CD4-positive, alpha-beta T cell (primary cell): ENCODE measurements at regions of chr14 and their contacts with region 1.

Region 1: GRCh38 chr14:94363151-94363624 is 25.2 kb downstream of the SERPINA1 start:
- DNase-seq: no peak
- ATAC-seq: no peak
- H3K4me3 ChIP-seq: no peak overlapping the region
- H3K4me3 Mint-ChIP-seq: no peak overlapping the region
- H3K27ac ChIP-seq: no peak overlapping the region
- H3K27ac Mint-ChIP-seq: no peak overlapping the region
- H3K4me1 ChIP-seq: no peaks in the 10 kb centered on the region
- H3K4me1 Mint-ChIP-seq: no peaks in the 10 kb centered on the region
- H3K27me3 ChIP-seq: peaks cover 0 to 4% of the 10 kb centered on the region in 2 experiments
- H3K27me3 Mint-ChIP-seq: peaks cover 10% of the 10 kb centered on the region
- CTCF ChIP-seq: no peak

Region 2: DNA sequence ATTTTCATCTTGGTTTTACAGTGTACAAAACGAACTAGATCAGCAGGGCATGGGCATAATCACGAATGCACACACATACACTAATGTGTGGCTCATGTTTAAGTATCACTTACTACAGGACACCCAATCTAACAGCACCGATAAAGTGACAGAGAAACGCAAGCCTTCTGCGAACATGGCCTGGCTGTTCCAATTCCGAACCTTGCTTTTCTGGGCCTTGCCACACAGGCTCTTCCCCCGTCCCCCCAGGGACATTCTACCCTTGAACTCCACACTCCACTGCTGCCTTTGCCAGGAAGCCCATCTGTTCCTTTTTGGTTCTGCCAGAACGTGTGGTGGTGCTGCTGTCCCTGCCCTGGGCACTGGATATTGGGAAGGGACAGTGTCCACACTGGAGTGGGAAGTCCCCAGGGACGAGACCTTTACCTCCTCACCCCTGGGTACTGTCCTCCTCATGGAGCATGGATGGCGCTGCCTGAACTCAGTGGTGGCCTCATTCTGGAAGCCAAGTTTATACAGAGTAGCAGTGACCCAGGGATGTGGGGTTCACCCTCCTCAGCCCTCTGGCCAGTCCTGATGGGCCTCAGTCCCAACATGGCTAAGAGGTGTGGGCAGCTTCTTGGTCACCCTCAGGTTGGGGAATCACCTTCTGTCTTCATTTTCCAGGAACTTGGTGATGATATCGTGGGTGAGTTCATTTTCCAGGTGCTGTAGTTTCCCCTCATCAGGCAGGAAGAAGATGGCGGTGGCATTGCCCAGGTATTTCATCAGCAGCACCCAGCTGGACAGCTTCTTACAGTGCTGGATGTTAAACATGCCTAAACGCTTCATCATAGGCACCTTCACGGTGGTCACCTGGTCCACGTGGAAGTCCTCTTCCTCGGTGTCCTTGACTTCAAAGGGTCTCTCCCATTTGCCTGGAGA is 17.3 kb after region 1 on chr14:
- CTCF ChIA-PET with region 1: no interaction called
- POLR2A ChIA-PET with region 1: no interaction called
- intact Hi-C with region 1: loop called in 1 of 2 experiments (anchors 1 kb)
- DNase-seq: no peak
- ATAC-seq: no peak
- H3K4me3 ChIP-seq: no peak overlapping the region
- H3K4me3 Mint-ChIP-seq: no peak overlapping the region
- H3K27ac ChIP-seq: no peak overlapping the region
- H3K27ac Mint-ChIP-seq: no peak overlapping the region
- H3K4me1 ChIP-seq: no peaks in the 10 kb centered on the region
- H3K4me1 Mint-ChIP-seq: no peaks in the 10 kb centered on the region
- H3K27me3 ChIP-seq: no peaks in the 10 kb centered on the region
- H3K27me3 Mint-ChIP-seq: no peaks in the 10 kb centered on the region
- CTCF ChIP-seq: no peak